ENCODE measurements at regions of chrX and their contacts with region 1.

Region 1: GRCh38 chrX:103367502-103367901 is 8.8 kb upstream of the BEX3 start:
- DNase-seq: no peak
- H3K4me3 ChIP-seq: no peak overlapping the region
- CTCF ChIP-seq: no peak

Region 2: DNA sequence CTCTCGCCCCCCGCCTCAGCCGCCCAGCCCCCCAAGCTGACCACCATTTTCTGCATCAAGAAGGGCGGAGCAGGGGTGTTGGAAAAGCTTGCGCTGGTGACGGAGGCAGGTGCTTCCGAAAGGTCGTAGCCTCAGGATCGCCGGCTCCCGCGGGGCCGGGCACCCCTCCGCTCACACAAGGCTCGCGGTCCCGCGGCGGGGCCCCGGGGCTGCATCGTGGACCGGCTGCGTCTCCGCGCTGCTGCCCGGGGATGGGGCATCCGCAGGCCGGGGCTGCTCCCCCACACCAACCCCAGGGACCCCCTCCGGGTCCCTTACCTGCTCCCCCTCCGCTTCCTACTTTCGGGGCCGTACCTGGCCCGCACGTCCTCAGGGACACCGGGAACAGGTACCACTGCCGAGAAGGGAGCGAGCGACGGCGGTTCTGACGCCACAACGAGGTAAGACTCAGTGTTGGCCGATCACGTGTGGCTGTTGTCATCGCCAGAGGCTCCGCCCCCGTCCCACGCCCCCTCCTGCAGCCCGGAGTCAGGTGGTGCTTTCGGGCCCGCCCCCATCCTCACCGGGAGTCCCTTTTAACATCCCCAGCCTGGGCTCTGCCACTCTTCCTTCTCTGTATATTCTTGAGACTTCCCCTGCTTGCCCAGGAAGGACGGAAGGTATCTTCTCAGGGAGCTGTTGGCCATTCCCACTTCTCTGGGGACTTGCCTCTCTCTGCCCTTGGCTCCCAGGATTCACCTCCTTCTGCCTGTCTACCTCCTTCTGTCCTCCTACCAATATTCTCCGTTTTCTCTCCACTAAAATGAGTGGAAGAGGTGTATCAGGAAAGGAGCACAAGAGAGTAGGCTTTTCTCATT is 56.7 kb before region 1 on chrX and contains the start of gene BEX2:
- in situ Hi-C with region 1: no loop called
- DNase-seq: peak; percentile 13
- H3K4me3 ChIP-seq: peak within 1 kb of the TSS; percentile 53
- CTCF ChIP-seq: no peak

Region 3: DNA sequence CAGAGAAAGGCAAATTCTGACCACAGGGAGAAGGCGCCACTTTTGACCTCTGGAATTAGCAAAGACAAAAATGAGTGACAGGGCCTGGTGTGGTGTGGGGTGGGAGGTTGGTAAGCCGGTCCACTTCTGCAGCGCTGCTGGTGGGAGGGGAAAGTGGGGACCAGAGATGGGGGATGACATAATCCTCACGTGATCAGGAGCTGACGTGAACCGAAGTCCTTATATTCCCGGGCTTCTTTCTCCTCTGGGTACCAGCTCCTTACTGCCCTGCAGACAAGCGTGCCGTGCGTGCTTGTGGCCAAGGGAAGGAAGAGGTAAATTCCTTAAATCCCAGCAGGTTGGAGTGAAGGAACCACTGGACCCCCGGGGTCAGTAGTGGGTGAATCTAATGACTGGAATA is 37.5 kb before region 1 on chrX and contains the start of gene TCEAL7:
- in situ Hi-C with region 1: no loop called
- DNase-seq: peak; percentile 18
- H3K4me3 ChIP-seq: peak within 1 kb of the TSS; percentile 46
- CTCF ChIP-seq: no peak

Region 4: DNA sequence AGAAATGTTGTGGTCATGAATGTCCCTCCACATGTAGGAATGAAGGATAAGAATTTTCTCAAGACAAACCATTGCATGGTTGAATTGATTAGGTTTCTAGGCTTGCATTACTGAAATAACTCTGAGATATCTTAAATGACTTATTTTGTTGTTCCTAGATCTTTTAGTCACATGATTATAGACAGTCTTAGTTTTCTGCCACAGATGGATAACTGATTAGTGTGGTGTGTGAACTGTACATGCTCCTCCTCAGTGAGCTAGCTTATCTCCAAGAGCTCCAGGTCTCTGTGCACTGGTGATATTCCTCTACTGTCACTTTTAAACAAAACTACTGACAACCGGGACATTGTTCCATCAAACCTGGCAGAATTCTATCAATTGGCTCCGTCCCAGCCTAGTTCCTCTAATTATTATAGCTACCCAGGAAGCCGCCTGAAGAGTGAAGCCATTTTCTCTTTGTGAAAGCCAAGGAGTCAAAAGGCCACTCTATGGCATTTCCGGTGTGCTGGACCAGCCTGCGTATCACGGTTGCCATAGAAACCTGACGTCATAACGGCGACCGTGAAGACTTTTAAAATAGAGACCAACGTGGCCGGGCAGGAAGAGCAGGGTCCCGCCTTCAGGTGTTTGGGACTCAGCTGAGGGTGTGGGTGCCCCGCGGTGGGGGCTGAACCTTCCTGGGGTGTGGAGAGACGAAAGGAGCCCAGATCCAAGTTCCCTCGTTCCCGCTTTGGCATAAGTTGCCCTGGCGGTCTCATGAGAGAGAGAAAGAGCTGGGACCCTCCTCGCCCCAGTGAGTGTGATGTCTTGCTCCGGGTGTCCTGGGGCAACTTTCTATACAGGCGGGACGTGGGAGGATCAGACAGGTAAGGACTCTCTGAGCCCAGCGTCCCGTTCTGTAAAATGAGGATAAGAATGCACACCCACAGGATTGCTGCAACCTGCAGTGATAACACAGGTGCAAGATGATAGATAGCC is 37.0 kb after region 1 on chrX:
- in situ Hi-C with region 1: loop called (anchors 5 kb)
- DNase-seq: peak; percentile 75
- H3K4me3 ChIP-seq: peak overlapping the region; percentile 42
- CTCF ChIP-seq: no peak

Region 5: DNA sequence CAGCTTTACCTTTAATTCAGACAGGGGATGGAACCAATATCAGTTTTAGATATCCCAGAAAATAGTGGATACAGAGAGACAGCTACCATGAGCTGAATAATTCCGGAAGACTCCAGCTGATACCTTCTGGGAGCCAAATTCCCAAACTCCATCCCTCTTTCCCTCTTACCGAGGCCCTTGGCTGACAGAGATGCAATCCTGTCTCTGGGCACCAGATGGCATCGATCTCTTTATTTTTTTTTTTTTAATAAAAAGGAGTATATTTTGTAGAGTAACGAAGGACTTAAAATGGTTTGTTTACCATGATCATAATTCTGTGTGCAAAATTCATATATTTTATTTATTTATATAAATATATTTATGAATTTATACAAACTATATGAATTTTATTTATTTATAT is 120.8 kb after region 1 on chrX:
- in situ Hi-C with region 1: no loop called
- DNase-seq: no peak
- H3K4me3 ChIP-seq: no peak overlapping the region
- CTCF ChIP-seq: peak; percentile 54

Measured in astrocyte of the cerebellum (primary cell).